Esophagus squamous epithelium (tissue), 5 donors: ENCODE measurements at regions of chr1 and their contacts with region 1.

Region 1: GRCh38 chr1:21659099-21659923 is 9.8 kb downstream of the RAP1GAP start:
- DNase-seq: peak; percentile 14
- H3K4me3 ChIP-seq: peak overlapping the region in 1 of 4 donors; percentile 46
- H3K27ac ChIP-seq: no peak overlapping the region
- H3K4me1 ChIP-seq: peaks cover 4 to 22% (median 4%) of the 10 kb centered on the region in 3 donors
- H3K27me3 ChIP-seq: peaks cover 0 to 52% (median 0%) of the 10 kb centered on the region in 4 donors
- CTCF ChIP-seq: peak; percentile 88 to 98 (median 95)
- POLR2A ChIP-seq: no peak

Region 2: DNA sequence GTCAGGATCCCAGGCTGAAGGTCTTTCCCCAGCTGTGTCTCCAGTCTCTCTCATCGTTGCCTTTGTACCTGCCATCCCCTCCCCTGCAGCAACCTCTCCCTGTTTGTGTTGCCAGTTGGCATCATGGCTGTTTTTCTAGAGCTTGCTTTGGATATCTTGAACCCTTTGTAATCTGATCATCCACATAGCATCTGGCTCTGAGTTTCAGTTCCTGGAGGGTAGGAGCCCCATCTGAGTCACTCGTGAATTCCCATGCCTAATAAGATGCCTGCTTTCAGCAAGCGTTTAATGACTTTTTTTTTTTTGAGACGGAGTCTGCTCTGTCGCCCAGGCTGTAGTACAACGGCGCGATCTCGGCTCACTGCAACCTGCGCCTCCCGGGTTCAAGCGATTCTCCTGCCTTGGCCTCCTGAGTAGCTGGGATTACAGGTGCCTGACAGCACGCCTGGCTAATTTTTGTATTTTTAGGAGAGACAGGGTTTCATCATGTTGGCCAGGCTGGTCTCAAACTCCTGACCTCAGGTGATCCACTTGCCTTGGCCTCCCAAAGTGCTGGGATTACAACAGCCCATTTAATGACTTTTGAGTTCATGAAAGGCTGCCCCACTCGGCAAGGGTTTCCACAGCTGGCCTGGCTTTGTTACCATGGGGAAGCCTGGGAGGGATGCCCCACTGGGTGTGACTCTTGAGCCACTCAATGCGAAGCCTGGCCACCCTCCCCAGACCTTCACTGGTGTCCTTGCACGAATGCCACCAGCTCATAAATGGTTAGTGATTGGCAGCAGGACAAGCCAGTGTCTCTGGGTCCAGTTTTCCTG is 138.2 kb before region 1 on chr1:
- intact Hi-C with region 1: loop called (anchors 10 kb)
- DNase-seq: no peak
- H3K4me3 ChIP-seq: no peak overlapping the region
- H3K27ac ChIP-seq: no peak overlapping the region
- H3K4me1 ChIP-seq: peaks cover 0 to 25% (median 6%) of the 10 kb centered on the region in 3 donors
- H3K27me3 ChIP-seq: no peaks in the 10 kb centered on the region
- CTCF ChIP-seq: no peak
- POLR2A ChIP-seq: no peak

Region 3: DNA sequence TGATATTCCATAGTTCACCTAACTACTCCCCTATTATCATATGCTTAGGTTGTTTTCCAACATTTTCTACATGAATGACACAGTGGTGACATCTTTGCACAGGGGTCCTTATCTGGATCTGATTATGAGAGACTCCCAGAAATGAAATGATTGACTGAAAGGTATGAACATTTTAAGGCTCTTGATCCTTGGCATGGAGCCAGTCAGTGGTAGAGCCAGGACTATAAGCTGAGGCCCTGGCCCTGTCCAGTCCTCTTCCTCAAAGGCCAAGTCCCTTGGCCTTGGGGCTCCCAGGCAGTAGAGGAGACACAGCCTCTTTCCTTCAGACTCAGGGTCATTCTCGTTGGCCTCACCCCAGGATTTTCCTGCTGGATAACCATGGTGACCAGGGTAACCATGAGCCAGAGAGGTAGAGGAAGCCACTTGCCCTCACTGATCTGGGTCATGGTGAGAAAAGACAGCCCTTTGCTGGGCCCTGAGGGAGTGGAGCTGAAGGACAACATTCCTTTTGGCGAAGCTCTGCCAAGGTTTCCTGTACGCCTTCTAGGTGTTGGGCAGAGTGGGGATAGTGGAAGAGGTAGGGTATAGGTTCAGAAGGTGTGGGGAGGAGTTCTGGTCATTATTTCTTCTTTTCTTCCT is 536.6 kb after region 1 on chr1:
- intact Hi-C with region 1: no loop called
- DNase-seq: no peak
- H3K4me3 ChIP-seq: no peak overlapping the region
- H3K27ac ChIP-seq: no peak overlapping the region
- H3K4me1 ChIP-seq: peaks cover 0 to 3% (median 0%) of the 10 kb centered on the region in 3 donors
- H3K27me3 ChIP-seq: peaks cover 0 to 15% (median 0%) of the 10 kb centered on the region in 4 donors
- CTCF ChIP-seq: no peak
- POLR2A ChIP-seq: no peak